ENCODE measurements at regions of chr4 and their contacts with region 1.

Region 1: DNA sequence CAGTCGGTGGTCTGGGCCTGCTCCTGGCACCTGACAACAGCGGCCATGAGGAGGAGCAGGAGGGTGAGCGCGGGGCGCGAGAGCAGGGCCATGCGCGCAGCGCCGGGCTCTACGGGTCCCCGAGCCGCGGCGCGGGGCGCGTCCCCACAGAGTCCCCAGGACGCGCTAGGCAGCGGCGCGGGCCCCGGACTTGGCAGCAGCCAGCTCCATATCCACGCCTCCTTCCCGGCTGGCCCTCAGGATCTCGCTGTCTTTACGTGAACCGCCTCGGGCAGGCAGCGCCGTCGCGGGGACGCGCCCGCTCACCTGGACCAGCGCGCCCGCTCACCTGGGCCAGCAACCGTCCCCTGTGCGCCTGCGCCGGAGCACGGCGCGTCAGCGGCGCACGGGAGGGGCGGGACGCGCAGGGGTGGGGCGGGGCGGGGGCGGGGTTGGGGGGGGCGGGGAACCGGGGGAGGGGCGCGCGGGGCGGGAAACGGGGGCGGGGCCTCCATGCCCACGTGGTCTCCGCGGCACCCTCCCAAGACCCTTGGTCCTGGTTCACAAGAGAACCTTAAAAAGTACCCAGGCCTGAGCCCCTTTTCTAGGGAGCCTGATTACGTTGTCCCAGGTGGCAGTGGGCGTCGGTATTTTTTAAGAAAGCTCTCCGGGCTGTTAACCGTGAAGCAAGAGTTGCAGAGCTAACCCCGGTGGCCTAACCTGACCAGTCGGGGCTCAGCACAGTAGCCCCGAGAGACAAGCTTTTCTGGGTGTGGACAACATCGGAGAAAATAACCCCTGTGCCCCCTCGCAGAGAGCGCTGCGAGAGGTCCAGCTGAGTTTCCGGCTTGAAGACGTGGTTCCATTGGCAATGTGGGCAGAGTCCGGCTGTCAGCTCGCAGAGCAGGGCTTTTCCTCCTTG is at the start of gene PLA2G12A:
- DNase-seq: peak; percentile 93
- H3K4me3 ChIP-seq: peak within 1 kb of the TSS; percentile 70 to 81 (median 78)
- H3K27ac ChIP-seq: peak within 1 kb of the TSS; percentile 56
- H3K4me1 ChIP-seq: peaks cover 8% of the 10 kb centered on the region
- H3K27me3 ChIP-seq: no peaks in the 10 kb centered on the region
- CTCF ChIP-seq: no peak
- total RNA-seq, gene PLA2G12A: 38.9 to 59.0 TPM

Region 2: DNA sequence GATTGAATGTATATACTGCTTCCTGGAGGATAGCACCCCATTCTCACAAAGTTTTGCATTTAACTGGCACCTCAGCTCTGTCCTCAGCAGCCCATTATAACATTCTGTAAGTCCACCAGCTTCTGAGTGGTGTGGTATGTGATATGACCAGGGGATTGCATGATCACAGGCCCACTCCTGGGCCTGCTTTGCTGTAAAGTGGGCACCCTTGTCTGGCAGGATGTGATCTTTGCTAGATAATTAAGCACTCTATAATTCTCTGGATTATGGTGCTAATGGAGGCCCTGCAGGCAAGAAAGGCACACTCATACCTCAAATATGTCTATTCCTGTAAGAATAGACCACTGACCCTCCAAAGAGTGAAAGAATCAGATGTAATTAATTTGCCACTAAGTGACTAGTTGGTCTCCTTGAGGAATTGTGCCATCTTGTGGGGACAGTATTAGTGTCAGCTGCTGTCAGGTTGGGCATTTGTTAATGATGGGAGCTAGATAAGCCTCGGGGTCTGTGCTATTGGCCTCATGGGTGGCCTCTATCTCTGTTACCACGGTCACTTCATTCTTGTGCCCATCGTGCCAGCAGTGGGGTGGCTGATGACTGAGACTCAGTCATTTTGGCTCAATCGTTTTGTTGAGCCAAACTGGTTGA is 74.1 kb after region 1 on chr4:
- CTCF ChIA-PET with region 1: no interaction called
- dilution Hi-C with region 1: no loop called
- in situ Hi-C with region 1: no loop called
- intact Hi-C with region 1: loop called (anchors 5 kb)
- DNase-seq: peak; percentile 36
- H3K4me3 ChIP-seq: no peak overlapping the region
- H3K27ac ChIP-seq: no peak overlapping the region
- H3K4me1 ChIP-seq: no peaks in the 10 kb centered on the region
- H3K27me3 ChIP-seq: no peaks in the 10 kb centered on the region
- CTCF ChIP-seq: peak; percentile 49 to 57

Region 3: GRCh38 chr4:109815151-109816081 is 85.4 kb after region 1 on chr4 and contains the start of gene GAR1:
- CTCF ChIA-PET with region 1: no interaction called
- dilution Hi-C with region 1: no loop called
- in situ Hi-C with region 1: no loop called
- intact Hi-C with region 1: loop called (anchors 2 kb)
- DNase-seq: peak; percentile 93
- H3K4me3 ChIP-seq: peak within 1 kb of the TSS; percentile 72 to 87 (median 82)
- H3K27ac ChIP-seq: peak within 1 kb of the TSS; percentile 87
- H3K4me1 ChIP-seq: no peaks in the 10 kb centered on the region
- H3K27me3 ChIP-seq: no peaks in the 10 kb centered on the region
- CTCF ChIP-seq: no peak
- total RNA-seq, gene GAR1: 3.3 to 22.7 TPM

Measured in mammary epithelial cell (primary cell).